ENCODE measurements at regions of chr6 and their contacts with region 1.

Region 1: DNA sequence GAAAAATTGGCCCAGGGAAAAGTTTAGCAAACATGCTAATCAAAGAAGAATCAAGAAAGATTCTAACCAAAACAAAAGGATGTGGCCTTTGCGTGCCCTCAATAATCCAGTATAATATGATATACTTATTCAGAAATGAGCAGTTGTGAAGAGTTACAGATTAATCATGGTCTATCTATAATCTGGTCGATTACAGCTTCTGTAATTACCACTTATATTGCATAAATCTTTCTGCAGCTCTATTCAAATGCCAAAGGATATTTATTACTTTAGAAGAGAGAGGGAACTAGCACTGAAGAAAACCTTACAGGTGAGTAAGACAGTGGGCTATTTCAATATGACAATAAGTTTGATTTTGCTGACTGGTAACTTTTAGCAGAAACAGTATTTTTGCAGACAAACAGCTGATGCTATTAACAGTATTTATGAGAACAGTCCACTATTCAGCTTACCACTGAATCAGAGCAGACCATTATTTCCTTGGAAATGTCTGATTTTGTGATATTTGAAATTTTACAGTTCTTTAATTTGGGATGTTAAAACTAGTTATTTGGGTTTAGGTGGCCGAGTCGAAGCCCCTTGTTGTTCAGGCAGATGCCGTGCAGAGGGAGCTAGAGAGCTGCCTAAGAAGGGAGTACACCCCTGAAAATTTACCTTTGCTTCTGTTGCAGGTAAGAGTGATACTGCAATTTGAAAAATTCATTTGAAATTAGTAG is 92.2 kb downstream of the CEP57L1 start:
- DNase-seq: peak; percentile 60 to 74 (median 67)
- H3K4me3 ChIP-seq: peak overlapping the region in 1 of 7 experiments; percentile 49
- H3K27ac ChIP-seq: peak overlapping the region in 1 of 2 experiments; percentile 27
- H3K4me1 ChIP-seq: peaks cover 13 to 58% (median 24%) of the 10 kb centered on the region in 4 experiments
- H3K27me3 ChIP-seq: no peaks in the 10 kb centered on the region

Region 2: DNA sequence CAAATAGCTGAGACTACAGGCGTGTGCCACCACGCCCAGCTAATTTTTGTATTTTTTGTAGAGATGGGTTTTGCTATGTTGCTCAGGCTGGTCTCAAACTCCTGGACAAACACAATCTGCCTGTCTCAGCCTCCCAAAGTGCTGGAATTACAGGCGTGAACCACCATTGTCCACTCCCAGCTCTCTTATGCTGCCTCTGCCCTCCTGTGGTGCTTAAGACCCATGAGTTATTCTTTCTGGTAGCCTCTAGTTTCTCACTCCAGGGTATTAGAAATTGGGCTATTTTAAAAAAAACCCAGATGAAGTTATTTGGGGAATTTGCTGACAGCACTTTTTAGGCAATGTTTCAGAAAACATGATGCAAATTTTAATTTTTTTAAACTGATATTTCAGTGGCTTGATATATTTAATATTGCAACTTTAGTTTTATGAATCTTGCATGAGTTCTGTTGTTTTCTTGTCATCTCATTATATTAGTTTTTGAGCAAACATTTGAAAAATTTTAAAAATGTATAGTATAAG is 740.9 kb before region 1 on chr6:
- CTCF ChIA-PET with region 1: no interaction called
- POLR2A ChIA-PET with region 1: no interaction called
- DNase-seq: no peak
- H3K4me3 ChIP-seq: no peak overlapping the region
- H3K27ac ChIP-seq: no peak overlapping the region
- H3K4me1 ChIP-seq: no peaks in the 10 kb centered on the region
- H3K27me3 ChIP-seq: no peaks in the 10 kb centered on the region

Region 3: GRCh38 chr6:109236115-109237076 is 48.8 kb after region 1 on chr6:
- CTCF ChIA-PET with region 1: interaction called, 15 read pairs
- POLR2A ChIA-PET with region 1: no interaction called
- DNase-seq: peak in 2 of 3 donors; percentile 60 to 71
- H3K4me3 ChIP-seq: peak overlapping the region in 4 of 7 experiments; percentile 3 to 55 (median 36)
- H3K27ac ChIP-seq: peak overlapping the region in 1 of 2 experiments; percentile 73
- H3K4me1 ChIP-seq: peaks cover 11 to 61% (median 51%) of the 10 kb centered on the region in 4 experiments
- H3K27me3 ChIP-seq: no peaks in the 10 kb centered on the region

Region 4: DNA sequence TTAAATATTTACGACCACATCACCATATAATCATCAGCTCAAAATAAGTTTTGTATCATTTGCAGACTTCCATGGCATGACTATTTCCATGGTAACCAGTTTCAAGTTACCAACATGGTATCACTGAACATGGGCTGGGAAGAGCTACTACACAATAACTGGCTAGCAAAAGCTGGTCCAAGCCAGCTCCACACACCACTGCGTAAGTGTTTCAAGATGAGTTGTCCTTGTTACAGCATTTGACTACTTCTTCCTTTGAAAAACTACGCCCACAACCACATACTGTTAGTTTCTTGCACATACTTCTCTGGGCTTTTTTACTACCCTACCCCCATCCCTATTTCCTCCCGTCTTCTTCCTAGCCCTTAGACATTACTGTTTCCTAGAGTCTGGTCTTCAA is 186.2 kb after region 1 on chr6:
- CTCF ChIA-PET with region 1: interaction called, 23 read pairs
- POLR2A ChIA-PET with region 1: no interaction called
- DNase-seq: peak in 2 of 3 donors; percentile 45 to 50
- H3K4me3 ChIP-seq: peak overlapping the region in 3 of 7 experiments; percentile 38 to 96 (median 58)
- H3K27ac ChIP-seq: peak overlapping the region in 1 of 2 experiments; percentile 46
- H3K4me1 ChIP-seq: peaks cover 42 to 85% (median 56%) of the 10 kb centered on the region in 4 experiments
- H3K27me3 ChIP-seq: no peaks in the 10 kb centered on the region

Region 5: GRCh38 chr6:109389650-109390274 is 202.2 kb after region 1 on chr6:
- CTCF ChIA-PET with region 1: interaction called, 78 read pairs
- POLR2A ChIA-PET with region 1: interaction called, 3 read pairs
- DNase-seq: no peak
- H3K4me3 ChIP-seq: no peak overlapping the region
- H3K27ac ChIP-seq: no peak overlapping the region
- H3K4me1 ChIP-seq: peaks cover 0 to 47% (median 18%) of the 10 kb centered on the region in 4 experiments
- H3K27me3 ChIP-seq: no peaks in the 10 kb centered on the region

Region 6: DNA sequence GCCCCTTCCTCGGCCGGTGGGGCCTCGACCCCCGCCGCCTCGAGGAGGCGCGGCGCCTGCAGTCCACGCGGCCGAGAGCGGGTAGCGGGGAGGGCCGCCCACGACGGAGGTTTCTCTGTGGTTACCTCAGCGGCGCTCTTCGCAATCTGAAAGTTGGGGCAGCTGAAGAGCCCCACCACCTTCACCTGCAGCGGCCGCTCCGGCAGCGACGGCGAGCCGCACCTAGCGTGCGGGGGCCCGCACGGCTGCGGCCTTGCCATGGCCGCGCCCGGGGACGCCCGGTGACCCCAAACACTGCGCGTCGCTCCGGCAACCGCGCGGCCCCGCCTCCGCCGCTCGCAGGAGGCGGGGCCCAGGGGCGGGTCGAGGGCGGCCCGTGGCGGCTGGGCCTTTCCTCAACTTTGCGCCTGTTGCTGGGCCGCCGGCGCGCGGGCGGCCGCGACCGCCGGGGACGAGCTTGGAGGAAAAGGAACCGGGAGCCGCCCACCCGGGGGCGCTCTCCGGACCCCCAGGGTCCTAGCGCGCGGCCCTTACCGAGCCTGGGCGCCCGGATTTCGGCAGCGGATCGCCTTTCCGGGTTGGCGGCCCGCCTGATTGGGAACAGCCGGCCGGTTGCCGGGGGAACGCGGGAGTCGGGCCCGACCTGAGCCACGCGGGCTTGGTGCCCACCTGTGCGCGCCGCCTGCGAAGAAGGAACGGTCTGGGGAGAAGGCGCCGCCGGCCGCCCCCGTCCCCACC is 252.9 kb after region 1 on chr6 and contains the starts of genes PPIL6 and SMPD2:
- CTCF ChIA-PET with region 1: interaction called, 17 read pairs
- POLR2A ChIA-PET with region 1: no interaction called
- DNase-seq: peak; percentile 88 to 94 (median 94)
- H3K4me3 ChIP-seq: peak within 1 kb of the TSS; percentile 60 to 91 (median 86)
- H3K27ac ChIP-seq: peak within 1 kb of the TSS; percentile 83 to 92
- H3K4me1 ChIP-seq: peaks cover 4 to 24% (median 21%) of the 10 kb centered on the region in 4 experiments
- H3K27me3 ChIP-seq: no peaks in the 10 kb centered on the region